CD4-positive, alpha-beta memory T cell (primary cell): ENCODE measurements at regions of chr6 and their contacts with region 1.

Region 1: GRCh38 chr6:128725271-128726233 is 157.4 kb upstream of the LAMA2 start:
- DNase-seq: peak in 4 of 5 donors; percentile 8 to 19 (median 12)
- H3K4me3 ChIP-seq: no peak overlapping the region
- H3K4me3 Mint-ChIP-seq: no peak overlapping the region
- H3K27ac ChIP-seq: no peak overlapping the region
- H3K27ac Mint-ChIP-seq: no peak overlapping the region
- H3K4me1 ChIP-seq: no peaks in the 10 kb centered on the region
- H3K4me1 Mint-ChIP-seq: no peaks in the 10 kb centered on the region
- H3K27me3 ChIP-seq: no peaks in the 10 kb centered on the region
- H3K27me3 Mint-ChIP-seq: peaks cover 13 to 14% of the 10 kb centered on the region in 2 donors

Region 2: GRCh38 chr6:127606131-127606562 is 1119.4 kb before region 1 on chr6:
- CTCF ChIA-PET with region 1: no interaction called
- POLR2A ChIA-PET with region 1: no interaction called
- intact Hi-C with region 1: loop called (anchors 5 kb)
- DNase-seq: peak in 2 of 5 donors; percentile 3 to 6
- H3K4me3 ChIP-seq: no peak overlapping the region
- H3K4me3 Mint-ChIP-seq: no peak overlapping the region
- H3K27ac ChIP-seq: no peak overlapping the region
- H3K27ac Mint-ChIP-seq: no peak overlapping the region
- H3K4me1 ChIP-seq: no peaks in the 10 kb centered on the region
- H3K4me1 Mint-ChIP-seq: no peaks in the 10 kb centered on the region
- H3K27me3 ChIP-seq: no peaks in the 10 kb centered on the region
- H3K27me3 Mint-ChIP-seq: peaks cover 1 to 2% of the 10 kb centered on the region in 2 donors

Region 3: DNA sequence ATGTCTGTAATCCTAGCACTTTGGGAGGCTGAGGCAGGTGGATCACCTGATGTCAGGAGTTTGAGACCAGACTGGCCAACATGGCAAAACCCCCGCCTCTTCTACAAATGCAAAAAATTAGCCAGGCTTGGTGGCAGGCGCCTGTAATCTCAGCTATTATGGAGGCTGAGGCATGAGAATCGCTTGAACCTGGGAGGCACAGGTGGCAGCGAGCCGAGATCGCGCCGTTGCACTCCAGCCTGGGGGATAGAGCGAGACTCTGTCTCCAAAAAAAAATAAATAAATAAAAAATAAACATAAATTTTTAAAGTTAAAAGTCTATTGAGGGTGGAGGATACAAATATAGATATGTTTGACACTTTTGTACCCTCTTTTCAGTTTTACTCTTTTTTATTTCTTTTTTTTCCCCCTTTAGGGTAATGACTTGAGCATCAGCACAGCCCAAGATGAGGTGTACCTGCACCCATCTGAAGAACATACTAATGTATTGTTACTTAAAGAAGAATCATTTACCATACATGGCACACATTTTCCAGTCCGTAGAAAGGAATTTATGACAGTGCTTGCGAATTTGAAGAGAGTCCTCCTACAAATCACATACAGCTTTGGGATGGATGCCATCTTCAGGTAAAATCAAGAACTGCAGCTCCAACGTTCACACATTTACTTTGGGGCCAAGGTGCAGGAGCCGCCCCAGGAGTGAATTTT is 526.3 kb after region 1 on chr6:
- CTCF ChIA-PET with region 1: interaction called, 4 read pairs
- POLR2A ChIA-PET with region 1: no interaction called
- intact Hi-C with region 1: loop called (anchors 10 kb)
- DNase-seq: peak; percentile 41 to 57 (median 46)
- H3K4me3 ChIP-seq: no peak overlapping the region
- H3K4me3 Mint-ChIP-seq: peak overlapping the region in 2 of 8 donors; percentile 10 to 25
- H3K27ac ChIP-seq: no peak overlapping the region
- H3K27ac Mint-ChIP-seq: no peak overlapping the region
- H3K4me1 ChIP-seq: peaks cover 5% of the 10 kb centered on the region
- H3K4me1 Mint-ChIP-seq: peaks cover 0 to 15% (median 9%) of the 10 kb centered on the region in 4 donors
- H3K27me3 ChIP-seq: no peaks in the 10 kb centered on the region
- H3K27me3 Mint-ChIP-seq: peaks cover 16 to 22% of the 10 kb centered on the region in 2 donors